ENCODE measurements at regions of chr14 and their contacts with region 1.

Region 1: DNA sequence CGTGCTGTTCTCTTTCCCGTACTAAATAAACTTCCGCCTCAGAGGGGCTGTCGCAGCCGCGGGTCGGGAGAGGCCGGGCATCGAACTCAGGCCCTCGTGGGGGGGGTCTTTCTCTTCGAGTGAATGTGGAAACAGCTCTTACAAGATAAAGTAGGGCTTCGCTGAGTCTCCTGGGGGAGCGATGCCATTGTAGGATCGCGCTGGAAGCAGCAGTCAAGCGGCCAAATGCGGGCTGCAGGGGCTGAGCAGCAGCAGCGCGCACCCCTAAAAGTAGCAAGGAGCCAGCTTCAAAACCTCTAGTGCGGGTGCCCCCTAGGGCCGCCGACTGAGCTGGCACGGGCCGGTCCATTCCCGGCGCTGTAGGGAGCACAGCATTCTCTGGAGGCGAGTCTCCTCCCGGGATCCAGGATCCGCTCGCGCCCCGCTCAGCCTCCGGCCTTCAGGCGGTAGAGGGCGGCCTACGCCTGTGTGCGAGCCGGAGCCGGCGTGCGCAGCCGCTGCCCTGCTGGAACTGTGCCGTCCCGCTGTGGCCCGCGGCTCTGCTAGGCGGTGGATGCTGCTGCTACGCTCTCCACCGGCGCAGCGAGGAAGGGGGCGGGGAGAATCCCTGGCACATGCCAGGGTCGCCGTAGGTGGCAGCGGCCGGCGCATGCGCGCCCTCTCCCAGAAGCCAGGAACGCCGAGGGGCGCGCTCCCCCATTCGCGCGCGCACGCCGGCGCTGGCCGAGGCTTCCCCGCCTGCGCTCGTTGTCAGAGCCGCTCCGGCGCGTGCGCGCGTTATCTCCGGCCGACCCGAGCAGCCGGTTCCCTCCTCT is at the start of gene FUT8:
- DNase-seq: peak; percentile 93
- H3K4me3 Mint-ChIP-seq: peak within 1 kb of the TSS; percentile 91
- H3K27ac Mint-ChIP-seq: peak within 1 kb of the TSS; percentile 93
- H3K4me1 Mint-ChIP-seq: peaks cover 38% of the 10 kb centered on the region
- H3K27me3 Mint-ChIP-seq: no peaks in the 10 kb centered on the region
- total RNA-seq, gene FUT8: 85.0 to 85.5 TPM

Region 2: DNA sequence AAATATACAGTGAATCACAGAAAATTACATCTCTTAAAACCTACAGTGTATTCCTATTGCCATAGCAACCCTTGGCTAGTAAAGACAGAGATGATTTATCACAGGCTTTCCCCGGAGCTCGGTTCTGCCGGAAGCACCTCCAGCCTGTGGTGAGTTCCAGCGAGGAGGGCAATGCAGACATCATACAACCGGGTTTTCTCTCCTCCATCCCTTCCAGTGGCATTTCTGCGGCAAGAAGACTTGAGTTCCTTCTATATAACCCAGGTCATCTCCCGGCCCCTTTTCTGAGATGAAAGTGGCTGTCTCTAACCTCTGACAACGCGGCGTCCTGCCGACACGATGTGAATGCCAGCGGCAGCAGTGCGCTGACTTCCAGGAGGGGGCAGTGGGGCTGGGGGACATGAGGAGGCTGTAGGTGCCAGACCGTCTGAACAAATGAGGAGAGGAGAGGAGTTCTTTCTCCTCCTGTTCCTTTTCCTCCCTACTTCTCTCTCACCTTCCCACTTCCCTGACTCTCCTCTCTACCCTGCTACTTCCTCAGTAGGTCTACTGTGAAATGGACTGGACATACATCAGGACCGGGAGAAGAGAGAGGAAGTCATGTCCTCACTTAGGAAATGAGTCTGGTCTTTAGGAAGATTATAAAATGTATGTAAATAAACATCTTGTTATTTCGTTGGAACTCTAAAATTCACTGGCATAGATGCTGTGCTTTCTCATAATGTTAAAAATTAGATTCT is 241.3 kb before region 1 on chr14:
- CTCF ChIA-PET with region 1: interaction called, 52 read pairs
- POLR2A ChIA-PET with region 1: interaction called, 26 read pairs
- DNase-seq: peak; percentile 59
- H3K4me3 Mint-ChIP-seq: peak overlapping the region; percentile 66
- H3K27ac Mint-ChIP-seq: no peak overlapping the region
- H3K4me1 Mint-ChIP-seq: peaks cover 37% of the 10 kb centered on the region
- H3K27me3 Mint-ChIP-seq: peaks cover 8% of the 10 kb centered on the region

Region 3: GRCh38 chr14:65281991-65282895 is 130.0 kb before region 1 on chr14:
- CTCF ChIA-PET with region 1: interaction called, 35 read pairs
- POLR2A ChIA-PET with region 1: interaction called, 35 read pairs
- DNase-seq: peak; percentile 46
- H3K4me3 Mint-ChIP-seq: peak overlapping the region; percentile 60
- H3K27ac Mint-ChIP-seq: peak overlapping the region; percentile 84
- H3K4me1 Mint-ChIP-seq: peaks cover 37% of the 10 kb centered on the region
- H3K27me3 Mint-ChIP-seq: no peaks in the 10 kb centered on the region

Region 4: GRCh38 chr14:65462411-65462810 is 50.2 kb after region 1 on chr14:
- CTCF ChIA-PET with region 1: no interaction called
- POLR2A ChIA-PET with region 1: no interaction called
- DNase-seq: no peak
- H3K4me3 Mint-ChIP-seq: no peak overlapping the region
- H3K27ac Mint-ChIP-seq: peak overlapping the region; percentile 17
- H3K4me1 Mint-ChIP-seq: peaks cover 29% of the 10 kb centered on the region
- H3K27me3 Mint-ChIP-seq: no peaks in the 10 kb centered on the region

Region 5: DNA sequence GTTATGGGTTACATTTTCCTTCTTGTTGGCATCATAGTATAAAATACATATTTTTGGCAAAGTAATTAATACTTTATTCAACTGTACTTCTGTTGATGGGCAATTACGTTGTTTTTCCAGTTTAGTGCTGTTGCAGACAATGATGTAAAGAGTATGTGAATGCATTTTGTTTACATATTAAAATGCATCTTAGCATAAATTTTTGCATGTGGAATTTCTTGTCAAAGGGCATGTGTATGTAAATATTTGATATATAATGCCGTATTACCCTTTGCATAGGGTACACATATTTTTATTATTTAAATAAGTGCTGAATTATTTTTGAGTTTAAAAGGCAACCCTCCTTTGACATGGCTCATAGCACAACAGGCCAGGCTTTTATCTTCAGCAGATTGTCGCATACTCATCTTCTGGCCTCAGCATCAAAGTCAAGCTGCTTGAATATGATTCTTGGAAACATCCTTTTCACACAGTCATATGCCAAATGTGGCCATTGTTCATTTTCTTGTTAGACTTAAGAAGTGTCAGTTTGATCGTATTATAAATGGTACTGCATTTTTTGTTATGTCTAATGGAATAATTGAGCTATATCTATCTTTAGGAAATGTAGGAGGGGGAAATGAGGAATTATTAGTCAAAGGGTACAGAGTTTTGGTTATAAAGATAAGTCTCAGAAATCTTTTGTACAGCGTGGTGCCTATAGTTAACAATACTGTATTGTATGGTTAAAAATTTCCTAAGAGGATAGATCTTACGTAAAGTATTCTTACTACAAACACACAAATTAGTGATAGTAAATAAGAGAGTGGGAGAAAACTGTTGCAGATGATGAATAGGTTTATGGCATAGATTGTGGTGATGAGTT is 138.8 kb after region 1 on chr14:
- CTCF ChIA-PET with region 1: no interaction called
- POLR2A ChIA-PET with region 1: no interaction called
- DNase-seq: no peak
- H3K4me3 Mint-ChIP-seq: no peak overlapping the region
- H3K27ac Mint-ChIP-seq: no peak overlapping the region
- H3K4me1 Mint-ChIP-seq: no peaks in the 10 kb centered on the region
- H3K27me3 Mint-ChIP-seq: no peaks in the 10 kb centered on the region

Region 6: DNA sequence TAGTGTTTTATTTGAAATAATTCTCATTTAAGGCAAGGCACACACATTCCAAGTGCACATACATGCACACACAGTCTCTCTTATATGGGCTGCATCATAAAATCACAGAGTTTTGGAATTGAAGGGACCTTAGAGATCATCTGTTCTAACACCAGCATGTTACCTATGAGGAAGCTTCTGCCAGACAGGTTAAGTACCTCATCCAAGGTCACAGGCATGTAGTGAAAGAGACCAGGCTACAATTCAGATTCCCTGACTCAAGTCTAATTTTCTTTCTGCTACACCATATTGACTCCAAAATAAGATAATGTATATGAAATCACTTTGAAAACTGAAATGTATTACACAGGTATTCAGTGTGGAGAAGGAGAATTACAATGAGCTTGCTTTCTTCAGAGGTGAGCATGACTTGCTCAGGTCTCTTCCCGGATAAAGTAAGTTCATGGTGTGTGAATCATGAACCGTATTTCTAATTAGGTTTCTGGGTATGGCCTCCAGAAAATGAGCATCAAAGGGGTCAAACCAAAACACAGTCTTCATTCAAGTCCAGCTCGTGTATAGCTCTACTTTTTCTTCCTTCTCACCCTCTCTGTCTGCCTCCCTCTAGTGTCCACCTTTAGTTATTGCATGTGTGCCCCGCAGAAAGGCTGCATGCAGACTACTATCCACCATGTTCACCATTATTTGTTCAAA is 412.2 kb after region 1 on chr14:
- CTCF ChIA-PET with region 1: interaction called, 70 read pairs
- POLR2A ChIA-PET with region 1: interaction called, 9 read pairs
- DNase-seq: peak; percentile 69
- H3K4me3 Mint-ChIP-seq: no peak overlapping the region
- H3K27ac Mint-ChIP-seq: no peak overlapping the region
- H3K4me1 Mint-ChIP-seq: peaks cover 14% of the 10 kb centered on the region
- H3K27me3 Mint-ChIP-seq: peaks cover 3% of the 10 kb centered on the region

Region 7: DNA sequence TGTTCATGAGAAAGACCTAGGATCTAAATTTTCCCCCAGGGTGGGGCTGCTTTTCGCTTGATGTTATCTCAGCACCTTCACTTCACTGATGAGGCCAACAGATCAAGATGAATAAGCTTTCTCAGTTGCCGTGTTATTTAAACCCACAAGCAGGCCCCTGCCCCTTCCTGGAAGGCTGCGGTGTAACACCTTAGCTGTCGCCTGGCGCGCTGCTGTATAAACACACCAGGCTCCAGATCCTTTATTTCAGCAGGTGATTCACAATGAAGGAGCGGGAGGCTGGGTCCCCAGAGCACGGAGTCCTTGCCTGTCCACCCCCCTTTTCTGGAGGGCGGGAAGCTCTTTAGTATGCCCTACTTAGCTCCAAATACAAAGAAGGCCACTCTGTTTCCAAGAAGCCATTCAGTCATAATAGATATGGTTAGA is 515.7 kb after region 1 on chr14:
- CTCF ChIA-PET with region 1: interaction called, 6 read pairs
- POLR2A ChIA-PET with region 1: interaction called, 20 read pairs
- DNase-seq: peak; percentile 91
- H3K4me3 Mint-ChIP-seq: no peak overlapping the region
- H3K27ac Mint-ChIP-seq: peak overlapping the region; percentile 95
- H3K4me1 Mint-ChIP-seq: peaks cover 64% of the 10 kb centered on the region
- H3K27me3 Mint-ChIP-seq: peaks cover 2% of the 10 kb centered on the region

Measured in activated CD4-positive, alpha-beta memory T cell treated with anti-CD3 and anti-CD28 coated beads, Interleukin-2, amount 10 ng/mL, durations not matched to agents 7 days and 5 days (primary cell).